CD8-positive, alpha-beta T cell (primary cell): ENCODE measurements at regions of chr14 and their contacts with region 1.

Region 1: GRCh38 chr14:67837011-67837624 is 17.5 kb downstream of the RAD51B start:
- DNase-seq: peak in 7 of 9 experiments; percentile 41 to 85 (median 60)
- ATAC-seq: peak; percentile 62
- H3K4me3 ChIP-seq: no peak overlapping the region
- H3K4me3 Mint-ChIP-seq: no peak overlapping the region
- H3K27ac ChIP-seq: no peak overlapping the region
- H3K27ac Mint-ChIP-seq: no peak overlapping the region
- H3K4me1 ChIP-seq: no peaks in the 10 kb centered on the region
- H3K4me1 Mint-ChIP-seq: peaks cover 5% of the 10 kb centered on the region
- H3K27me3 ChIP-seq: no peaks in the 10 kb centered on the region
- H3K27me3 Mint-ChIP-seq: no peaks in the 10 kb centered on the region
- CTCF ChIP-seq: peak; percentile 69

Region 2: DNA sequence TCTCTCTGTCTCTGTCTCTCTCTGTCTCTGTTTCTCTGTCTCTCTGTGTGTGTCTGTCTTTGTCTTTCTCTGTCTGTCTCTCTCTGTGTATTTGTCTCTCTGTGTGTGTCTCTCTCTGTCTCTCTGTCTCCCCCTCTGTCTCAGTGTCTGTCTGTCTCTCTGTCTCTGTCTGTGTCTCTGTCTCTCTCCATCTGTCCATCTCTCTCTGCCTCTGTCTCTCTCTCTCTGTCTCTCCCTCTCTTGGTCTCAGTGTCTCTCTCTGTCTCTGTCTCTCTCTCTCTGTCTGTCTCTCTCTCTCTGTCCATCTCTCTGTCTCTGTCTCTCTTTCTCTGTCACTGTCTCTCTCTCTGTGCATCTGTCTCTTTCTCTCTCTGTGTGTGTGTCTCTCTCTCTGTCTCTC is 791.7 kb before region 1 on chr14:
- CTCF ChIA-PET with region 1: no interaction called
- POLR2A ChIA-PET with region 1: no interaction called
- intact Hi-C with region 1: no loop called
- DNase-seq: no peak
- ATAC-seq: no peak
- H3K4me3 ChIP-seq: no peak overlapping the region
- H3K4me3 Mint-ChIP-seq: no peak overlapping the region
- H3K27ac ChIP-seq: no peak overlapping the region
- H3K27ac Mint-ChIP-seq: peak overlapping the region; percentile 4
- H3K4me1 ChIP-seq: no peaks in the 10 kb centered on the region
- H3K4me1 Mint-ChIP-seq: no peaks in the 10 kb centered on the region
- H3K27me3 ChIP-seq: no peaks in the 10 kb centered on the region
- H3K27me3 Mint-ChIP-seq: no peaks in the 10 kb centered on the region
- CTCF ChIP-seq: no peak

Region 3: GRCh38 chr14:67586369-67586768 is 250.7 kb before region 1 on chr14:
- CTCF ChIA-PET with region 1: no interaction called
- POLR2A ChIA-PET with region 1: no interaction called
- intact Hi-C with region 1: no loop called
- DNase-seq: no peak
- ATAC-seq: no peak
- H3K4me3 ChIP-seq: no peak overlapping the region
- H3K4me3 Mint-ChIP-seq: no peak overlapping the region
- H3K27ac ChIP-seq: no peak overlapping the region
- H3K27ac Mint-ChIP-seq: peak overlapping the region; percentile 13
- H3K4me1 ChIP-seq: no peaks in the 10 kb centered on the region
- H3K4me1 Mint-ChIP-seq: no peaks in the 10 kb centered on the region
- H3K27me3 ChIP-seq: no peaks in the 10 kb centered on the region
- H3K27me3 Mint-ChIP-seq: no peaks in the 10 kb centered on the region
- CTCF ChIP-seq: no peak

Region 4: DNA sequence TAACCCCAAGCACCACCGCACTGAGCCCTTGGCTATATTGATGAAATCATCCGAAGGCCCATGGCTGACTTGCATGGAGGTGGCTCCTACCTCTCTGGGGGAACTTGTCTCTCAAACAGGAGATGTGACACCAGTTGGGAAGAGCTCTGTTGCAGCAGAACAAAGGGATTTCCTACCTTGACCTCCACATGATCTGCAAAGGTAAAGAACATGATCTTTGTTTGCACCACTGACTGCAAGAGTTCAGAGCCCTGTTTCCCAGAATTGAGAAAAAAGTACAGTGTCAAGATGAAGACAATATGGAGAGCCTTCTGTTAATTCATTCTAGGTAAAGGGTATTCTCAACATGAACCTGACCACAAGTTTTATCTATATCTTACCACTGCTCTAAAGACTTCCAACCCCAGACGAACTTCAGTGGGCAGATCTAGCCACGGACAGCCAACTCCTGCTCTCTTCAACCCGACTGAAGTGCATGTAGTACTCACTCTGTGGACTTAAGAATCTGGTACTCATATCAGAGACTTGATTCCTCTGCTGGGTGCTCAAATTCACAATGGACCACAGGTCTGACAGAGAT is 52.8 kb before region 1 on chr14:
- CTCF ChIA-PET with region 1: no interaction called
- POLR2A ChIA-PET with region 1: no interaction called
- intact Hi-C with region 1: no loop called
- DNase-seq: no peak
- ATAC-seq: no peak
- H3K4me3 ChIP-seq: no peak overlapping the region
- H3K4me3 Mint-ChIP-seq: no peak overlapping the region
- H3K27ac ChIP-seq: no peak overlapping the region
- H3K27ac Mint-ChIP-seq: no peak overlapping the region
- H3K4me1 ChIP-seq: no peaks in the 10 kb centered on the region
- H3K4me1 Mint-ChIP-seq: no peaks in the 10 kb centered on the region
- H3K27me3 ChIP-seq: no peaks in the 10 kb centered on the region
- H3K27me3 Mint-ChIP-seq: no peaks in the 10 kb centered on the region
- CTCF ChIP-seq: no peak

Region 5: GRCh38 chr14:67852926-67853604 is 15.9 kb after region 1 on chr14:
- CTCF ChIA-PET with region 1: interaction called, 11 read pairs
- POLR2A ChIA-PET with region 1: interaction called, 3 read pairs
- intact Hi-C with region 1: no loop called
- DNase-seq: no peak
- ATAC-seq: no peak
- H3K4me3 ChIP-seq: no peak overlapping the region
- H3K4me3 Mint-ChIP-seq: no peak overlapping the region
- H3K27ac ChIP-seq: no peak overlapping the region
- H3K27ac Mint-ChIP-seq: no peak overlapping the region
- H3K4me1 ChIP-seq: no peaks in the 10 kb centered on the region
- H3K4me1 Mint-ChIP-seq: peaks cover 6% of the 10 kb centered on the region
- H3K27me3 ChIP-seq: no peaks in the 10 kb centered on the region
- H3K27me3 Mint-ChIP-seq: no peaks in the 10 kb centered on the region
- CTCF ChIP-seq: no peak

Region 6: DNA sequence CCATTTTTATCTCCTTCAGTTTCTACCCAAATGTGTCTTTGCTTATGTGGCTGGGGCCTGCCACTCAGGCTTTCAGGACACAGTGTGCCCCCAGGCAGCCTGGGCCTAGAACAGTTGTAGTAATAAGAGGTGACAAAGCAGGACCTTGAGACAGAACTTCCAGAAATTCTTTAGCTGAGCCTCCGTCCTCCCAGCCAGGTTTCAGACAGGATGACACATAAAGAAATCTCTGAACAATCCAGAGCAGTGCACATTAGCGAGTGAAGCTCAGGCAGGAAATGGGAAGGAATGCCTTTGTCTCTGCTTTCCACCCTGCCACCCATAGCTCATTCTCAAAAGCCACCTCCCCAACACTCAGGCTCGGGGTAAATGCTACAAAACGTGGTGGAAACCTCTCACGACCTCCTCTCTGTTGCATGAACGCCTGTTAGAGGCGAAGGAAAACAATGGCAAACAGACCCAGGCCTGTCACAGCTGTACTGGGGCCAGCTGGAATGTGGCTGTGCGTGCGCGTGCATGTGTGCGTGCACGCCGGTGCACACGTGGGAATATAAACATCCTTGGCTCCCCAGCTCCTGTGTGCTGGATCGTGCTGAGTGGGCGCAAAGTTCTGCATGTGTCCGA is 669.0 kb after region 1 on chr14:
- CTCF ChIA-PET with region 1: no interaction called
- POLR2A ChIA-PET with region 1: no interaction called
- intact Hi-C with region 1: no loop called
- DNase-seq: peak in 1 of 9 experiments; percentile 25
- ATAC-seq: no peak
- H3K4me3 ChIP-seq: no peak overlapping the region
- H3K4me3 Mint-ChIP-seq: peak overlapping the region; percentile 64
- H3K27ac ChIP-seq: peak overlapping the region; percentile 49 to 52
- H3K27ac Mint-ChIP-seq: peak overlapping the region; percentile 91
- H3K4me1 ChIP-seq: peaks cover 64% of the 10 kb centered on the region
- H3K4me1 Mint-ChIP-seq: peaks cover 73% of the 10 kb centered on the region
- H3K27me3 ChIP-seq: no peaks in the 10 kb centered on the region
- H3K27me3 Mint-ChIP-seq: no peaks in the 10 kb centered on the region
- CTCF ChIP-seq: no peak